H1 (cell line): ENCODE measurements at regions of chr14 and their contacts with region 1.

Region 1: DNA sequence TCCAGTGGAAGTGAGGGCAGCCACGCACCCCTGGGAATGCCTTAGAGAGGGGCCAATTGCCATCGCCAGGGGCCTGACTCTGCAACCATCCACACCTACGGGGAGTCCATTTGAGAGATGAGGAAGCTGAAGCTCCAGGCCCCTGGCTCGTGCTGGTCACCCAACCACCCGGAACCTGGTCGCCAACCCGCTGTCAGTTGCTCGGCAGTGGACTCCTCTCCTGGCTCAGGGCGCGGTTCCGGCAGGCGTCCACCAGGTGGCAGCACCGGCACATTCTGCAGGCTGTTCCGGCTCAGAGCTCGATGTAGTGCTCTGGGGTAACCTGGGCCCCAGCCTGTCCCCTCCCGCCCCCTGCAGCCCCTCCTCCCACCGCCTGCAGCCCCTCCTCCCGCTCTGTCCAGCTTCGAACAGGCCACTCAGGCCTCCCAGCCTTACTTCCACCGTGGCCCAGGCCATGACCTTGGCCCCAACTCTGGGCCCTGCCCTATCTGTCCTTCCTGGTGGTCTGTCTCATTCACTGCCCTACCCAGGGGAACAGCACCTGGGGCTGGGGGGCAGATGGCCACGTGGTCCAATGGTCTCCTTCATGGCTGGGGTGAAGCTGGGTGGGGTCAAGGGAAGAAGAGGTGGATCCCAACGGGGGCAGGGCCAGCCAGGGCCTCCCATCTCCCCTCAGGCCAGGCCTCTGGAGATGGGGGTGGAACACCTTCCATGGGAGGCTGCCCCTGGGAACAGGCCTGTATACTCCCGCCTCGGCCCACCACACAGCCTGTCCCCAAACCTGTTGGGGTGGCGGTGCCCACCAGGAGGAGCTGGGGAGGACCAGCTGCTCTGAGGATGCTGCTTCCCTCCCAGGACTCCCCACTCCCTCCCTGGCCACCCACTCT is 15.7 kb downstream of the SIVA1 start:
- DNase-seq: peak; percentile 80 to 100
- H3K4me3 ChIP-seq: peak overlapping the region in 1 of 4 experiments; percentile 42; a peak in 1 of 8 replicates
- H3K27ac ChIP-seq: no peak overlapping the region
- H3K4me1 ChIP-seq: peaks cover 0 to 11% (median 8%) of the 10 kb centered on the region in 4 experiments; a peak in 6 of 7 replicates
- H3K27me3 ChIP-seq: no peaks in the 10 kb centered on the region
- CTCF ChIP-seq: peak in 2 of 3 experiments; percentile 92 to 95; a peak in 3 of 4 replicates
- EP300 ChIP-seq: no peak
- POLR2A ChIP-seq: no peak; a peak in 1 of 3 replicates
- RAD21 ChIP-seq: peak; percentile 89 to 90

Region 2: GRCh38 chr14:104676130-104676679 is 92.5 kb before region 1 on chr14:
- CTCF ChIA-PET with region 1: no interaction called
- POLR2A ChIA-PET with region 1: no interaction called
- DNase-seq: no peak
- H3K4me3 ChIP-seq: peak overlapping the region in 1 of 4 experiments; percentile 60; a peak in 1 of 8 replicates
- H3K27ac ChIP-seq: no peak overlapping the region
- H3K4me1 ChIP-seq: peaks cover 5 to 53% (median 30%) of the 10 kb centered on the region in 4 experiments
- H3K27me3 ChIP-seq: peaks cover 0 to 7% (median 0%) of the 10 kb centered on the region in 4 experiments; a peak in 2 of 7 replicates
- CTCF ChIP-seq: no peak
- EP300 ChIP-seq: no peak
- POLR2A ChIP-seq: no peak
- RAD21 ChIP-seq: no peak

Region 3: GRCh38 chr14:104752735-104753531 is 15.7 kb before region 1 on chr14 and contains the start of gene SIVA1:
- CTCF ChIA-PET with region 1: interaction called, 11 read pairs
- POLR2A ChIA-PET with region 1: interaction called, 21 read pairs
- DNase-seq: peak; percentile 95 to 100
- H3K4me3 ChIP-seq: peak within 1 kb of the TSS; percentile 86 to 97 (median 94)
- H3K27ac ChIP-seq: peak within 1 kb of the TSS; percentile 85
- H3K4me1 ChIP-seq: peaks cover 0 to 13% (median 5%) of the 10 kb centered on the region in 4 experiments; a peak in 6 of 7 replicates
- H3K27me3 ChIP-seq: no peaks in the 10 kb centered on the region; a peak in 1 of 7 replicates
- CTCF ChIP-seq: no peak
- EP300 ChIP-seq: no peak
- POLR2A ChIP-seq: peak in 1 of 2 experiments; percentile 91; a peak in 2 of 3 replicates
- RAD21 ChIP-seq: no peak
- total RNA-seq, gene SIVA1: 123 and 135 TPM in 2 replicates

Region 4: DNA sequence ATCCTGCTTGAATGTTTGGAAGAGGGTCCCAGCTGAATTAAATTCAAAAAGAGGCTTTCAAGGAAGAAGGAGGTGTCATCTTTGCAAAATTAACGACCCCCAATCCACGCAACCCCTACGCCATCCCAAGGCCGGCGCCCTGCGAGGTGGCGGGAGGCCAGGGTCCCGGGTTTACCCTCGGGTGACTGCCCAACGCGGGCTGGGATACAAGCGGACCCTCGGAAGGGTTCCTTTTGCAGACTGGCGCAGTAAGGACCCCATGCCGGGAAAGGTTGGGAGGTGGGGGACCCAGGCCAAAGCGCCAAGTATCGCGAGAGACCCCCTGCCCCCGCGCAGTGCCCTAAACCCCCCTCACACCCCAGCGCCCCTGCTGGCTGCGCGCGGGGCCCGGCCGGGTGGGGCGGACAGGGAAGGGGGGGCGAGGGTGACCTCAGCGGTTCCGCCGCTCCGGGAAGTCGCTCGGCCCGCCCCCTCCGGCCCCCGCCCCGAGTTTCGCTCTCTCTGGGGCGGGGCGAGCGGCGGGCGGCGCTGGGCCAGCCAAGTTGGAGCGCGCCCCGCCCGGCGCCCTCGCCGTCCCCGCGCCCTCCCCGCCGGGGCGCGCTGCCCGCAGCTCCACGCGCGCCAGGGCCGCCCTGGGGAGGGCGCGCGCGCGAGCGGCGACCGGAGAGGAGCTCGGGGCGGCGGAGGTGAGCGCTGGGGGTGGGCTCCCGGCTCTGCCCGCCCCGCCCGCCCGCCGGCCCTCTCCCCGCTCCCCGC is 31.5 kb after region 1 on chr14:
- CTCF ChIA-PET with region 1: interaction called, 110 read pairs
- POLR2A ChIA-PET with region 1: interaction called, 6 read pairs
- DNase-seq: peak; percentile 36 to 85
- H3K4me3 ChIP-seq: peak overlapping the region; percentile 64 to 85 (median 76)
- H3K27ac ChIP-seq: no peak overlapping the region
- H3K4me1 ChIP-seq: peaks cover 0 to 30% (median 26%) of the 10 kb centered on the region in 4 experiments; a peak in 6 of 7 replicates
- H3K27me3 ChIP-seq: peaks cover 20 to 71% (median 58%) of the 10 kb centered on the region in 4 experiments
- CTCF ChIP-seq: no peak
- EP300 ChIP-seq: no peak
- POLR2A ChIP-seq: no peak
- RAD21 ChIP-seq: no peak

Region 5: DNA sequence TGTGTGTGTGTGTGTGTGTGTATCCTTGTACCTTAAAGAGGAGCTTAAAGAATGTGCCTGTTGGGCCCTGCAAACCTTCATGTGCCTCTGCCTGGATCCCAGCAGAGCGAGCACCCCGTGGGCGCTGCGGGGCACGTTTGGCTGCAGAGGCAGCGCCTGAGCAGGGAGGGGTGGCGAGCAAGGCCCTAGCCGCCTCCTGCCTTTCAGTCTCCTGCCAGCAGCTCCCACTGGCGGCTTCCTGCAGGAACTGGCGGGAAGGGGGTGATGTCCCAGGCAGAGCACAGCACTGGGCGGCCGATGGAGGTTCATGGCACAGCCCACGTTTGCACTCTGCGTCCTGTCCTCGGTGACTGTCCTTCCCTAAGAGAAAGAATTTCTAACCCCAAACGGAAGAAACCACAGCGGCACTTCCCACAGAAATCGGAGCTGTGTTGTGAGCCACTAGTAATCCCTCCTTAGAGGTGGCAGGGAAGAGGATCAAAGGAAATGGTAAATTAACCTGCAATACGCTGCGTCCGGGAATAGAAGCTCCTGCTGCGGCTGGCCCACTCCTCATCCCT is 52.1 kb after region 1 on chr14:
- CTCF ChIA-PET with region 1: interaction called, 37 read pairs
- POLR2A ChIA-PET with region 1: interaction called, 7 read pairs
- DNase-seq: peak; percentile 49 to 63
- H3K4me3 ChIP-seq: no peak overlapping the region
- H3K27ac ChIP-seq: no peak overlapping the region
- H3K4me1 ChIP-seq: peaks cover 0 to 5% (median under 1%) of the 10 kb centered on the region in 4 experiments; a peak in 3 of 7 replicates
- H3K27me3 ChIP-seq: peaks cover 0 to 21% (median 13%) of the 10 kb centered on the region in 4 experiments; a peak in 6 of 7 replicates
- CTCF ChIP-seq: peak; percentile 67 to 73 (median 69)
- EP300 ChIP-seq: peak in 1 of 2 experiments; percentile 84; a peak in 1 of 3 replicates
- POLR2A ChIP-seq: no peak
- RAD21 ChIP-seq: peak; percentile 51 to 61

Region 6: DNA sequence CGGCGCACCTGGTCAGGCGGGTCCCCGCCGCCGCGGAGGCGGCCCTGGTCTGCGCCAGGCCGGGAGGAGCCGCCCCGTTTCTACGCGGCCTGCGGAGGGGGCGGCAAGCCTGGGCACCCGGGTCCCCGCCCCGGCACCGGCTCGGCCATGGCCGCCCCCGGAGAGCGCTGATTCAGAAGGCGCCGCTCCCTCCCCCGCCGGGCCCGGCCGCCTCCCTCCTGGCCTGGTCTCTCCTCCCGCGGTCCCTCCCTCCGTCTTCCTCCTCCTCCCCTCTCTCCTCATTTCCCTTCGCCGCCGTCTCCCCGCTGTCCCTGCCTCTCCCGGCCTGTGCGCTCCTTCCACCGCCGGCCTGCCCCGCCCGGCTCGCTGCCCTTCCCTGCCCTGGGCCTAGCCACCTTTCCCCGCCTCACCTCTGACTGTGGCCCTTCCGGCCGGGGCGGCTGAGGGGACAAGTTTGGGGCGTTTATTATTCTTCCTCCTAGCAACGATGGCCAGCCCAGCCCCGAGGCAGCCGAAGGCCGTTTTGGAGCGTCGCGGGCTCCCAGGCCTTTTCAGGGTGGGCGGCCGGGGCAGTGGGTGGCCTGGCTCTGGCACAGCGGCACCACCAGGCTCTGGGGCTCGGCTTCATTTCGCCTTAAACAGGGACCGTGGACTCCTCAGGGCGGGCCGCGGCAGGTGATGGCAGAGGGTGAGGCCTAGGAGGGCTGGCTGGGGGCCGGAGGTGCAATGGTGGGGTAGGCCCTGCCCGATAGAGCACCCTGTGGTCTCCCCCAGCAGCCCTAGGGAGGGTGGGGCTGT is 97.2 kb after region 1 on chr14:
- CTCF ChIA-PET with region 1: interaction called, 38 read pairs
- POLR2A ChIA-PET with region 1: interaction called, 5 read pairs
- DNase-seq: peak in 1 of 2 experiments; percentile 77
- H3K4me3 ChIP-seq: peak overlapping the region; percentile 48 to 79 (median 61)
- H3K27ac ChIP-seq: no peak overlapping the region
- H3K4me1 ChIP-seq: peaks cover 0 to 13% (median 9%) of the 10 kb centered on the region in 4 experiments; a peak in 5 of 7 replicates
- H3K27me3 ChIP-seq: no peaks in the 10 kb centered on the region
- CTCF ChIP-seq: no peak
- EP300 ChIP-seq: no peak
- POLR2A ChIP-seq: no peak
- RAD21 ChIP-seq: no peak

Region 7: DNA sequence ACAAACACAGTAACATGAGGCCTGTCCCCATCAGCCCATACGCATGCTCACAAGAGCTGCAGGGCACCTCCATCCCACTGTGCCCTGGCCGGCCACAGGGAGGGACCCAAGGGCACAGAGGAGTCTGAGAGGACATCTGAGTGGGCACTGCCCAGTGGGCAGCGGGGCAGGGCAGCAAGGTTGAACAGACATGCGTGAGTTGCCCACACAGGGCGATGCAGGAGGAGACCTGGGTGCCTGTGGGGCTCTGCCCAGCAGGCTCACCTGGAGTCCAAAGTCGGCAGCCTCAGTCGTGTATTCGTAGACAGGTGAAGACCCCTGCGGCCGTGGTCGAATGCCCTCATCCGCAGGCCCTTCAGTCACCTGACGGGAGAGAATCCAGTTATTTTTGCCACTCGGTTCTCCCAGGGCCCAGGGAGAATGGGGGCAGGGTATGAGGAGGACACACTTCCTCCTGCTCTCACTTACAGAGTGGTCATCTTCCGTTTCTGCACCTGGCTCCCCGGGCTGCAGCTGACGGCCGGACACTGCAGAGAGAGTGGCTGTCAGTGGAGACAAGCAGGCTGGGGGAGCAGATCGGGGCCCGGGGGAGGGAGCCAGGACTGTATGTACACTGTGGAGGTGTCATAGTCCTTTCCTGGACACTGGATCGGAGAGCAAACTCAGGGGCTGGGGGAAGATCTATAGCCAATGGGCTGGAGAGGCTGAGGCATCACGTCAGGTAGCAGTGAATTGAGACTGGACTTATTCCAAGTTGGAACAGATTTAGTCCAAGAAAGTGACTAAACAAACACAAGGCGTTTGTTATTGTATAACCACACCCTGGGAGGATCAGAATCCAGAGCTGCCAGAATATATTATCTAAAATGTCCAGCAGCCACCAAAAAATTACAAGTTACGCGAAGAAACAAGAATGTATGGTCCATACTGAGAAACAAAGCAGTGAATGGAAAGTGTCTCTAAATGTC is 188.8 kb after region 1 on chr14:
- CTCF ChIA-PET with region 1: no interaction called
- POLR2A ChIA-PET with region 1: no interaction called
- DNase-seq: no peak
- H3K4me3 ChIP-seq: no peak overlapping the region
- H3K27ac ChIP-seq: no peak overlapping the region
- H3K4me1 ChIP-seq: no peaks in the 10 kb centered on the region
- H3K27me3 ChIP-seq: no peaks in the 10 kb centered on the region
- CTCF ChIP-seq: no peak
- EP300 ChIP-seq: no peak
- POLR2A ChIP-seq: no peak
- RAD21 ChIP-seq: no peak